ENCODE measurements at regions of chr2 and their contacts with region 1.

Region 1: DNA sequence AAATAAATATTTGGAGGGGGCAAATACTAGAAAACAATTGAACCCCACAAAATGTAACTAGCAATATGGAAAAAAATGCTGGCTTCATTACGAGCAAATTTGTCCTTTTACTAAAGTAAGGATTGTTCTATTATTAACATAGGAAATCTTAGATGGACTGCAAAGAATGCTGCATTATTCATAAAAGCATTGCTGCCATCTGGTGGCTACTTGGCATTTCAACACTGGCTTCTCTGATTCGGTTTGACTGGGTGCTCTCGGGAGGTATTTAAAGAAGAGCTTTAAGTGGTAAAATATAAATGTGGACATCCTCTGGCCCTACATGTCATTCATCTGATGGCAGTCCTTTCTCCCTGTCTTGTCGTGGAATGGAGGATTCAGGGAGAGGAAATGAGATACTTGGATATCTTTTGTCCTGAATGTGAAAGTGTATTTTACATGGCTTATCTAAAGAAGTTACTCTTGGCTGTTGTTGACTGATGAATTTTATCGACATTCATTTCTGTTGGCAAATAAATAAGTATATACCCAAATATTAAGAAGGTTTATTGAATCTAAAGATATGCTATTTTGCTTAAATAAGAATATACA is 130.2 kb downstream of the ARHGAP15 start:
- DNase-seq: peak; percentile 87
- ATAC-seq: no peak
- H3K4me3 Mint-ChIP-seq: peak overlapping the region; percentile 61
- H3K27ac Mint-ChIP-seq: peak overlapping the region; percentile 94
- H3K4me1 Mint-ChIP-seq: peaks cover 72% of the 10 kb centered on the region
- H3K27me3 Mint-ChIP-seq: no peaks in the 10 kb centered on the region
- CTCF ChIP-seq: peak; percentile 88

Region 2: DNA sequence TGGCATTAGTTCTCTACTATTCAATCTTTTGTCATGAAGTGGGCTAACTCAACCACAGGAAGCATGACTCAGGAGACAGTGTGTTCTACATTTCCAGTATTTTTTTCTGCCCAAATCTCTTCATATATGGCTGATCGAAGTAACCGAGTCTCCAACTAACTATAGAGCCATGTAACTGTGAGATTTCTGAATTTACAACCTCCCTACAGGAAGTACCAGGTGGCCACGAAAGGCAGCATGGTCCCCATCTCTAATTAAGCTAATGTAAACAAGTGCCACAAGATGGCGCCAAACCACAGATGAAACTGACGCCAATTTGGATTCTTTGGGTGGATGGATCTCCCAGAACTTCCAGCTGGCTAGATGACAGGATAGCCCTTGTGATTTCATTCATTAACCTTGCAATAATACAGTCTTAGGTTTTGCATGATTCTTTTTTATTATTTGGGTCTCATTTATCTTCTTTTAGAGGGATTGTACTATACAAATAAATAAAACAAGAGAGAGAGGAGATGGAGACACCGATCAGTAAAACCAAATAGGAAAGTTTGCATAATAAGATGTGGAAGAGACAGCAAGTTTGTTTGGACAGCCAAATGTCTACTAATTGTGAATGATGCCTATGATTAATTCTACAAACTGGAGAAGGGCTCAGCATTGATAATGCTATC is 148.6 kb before region 1 on chr2:
- CTCF ChIA-PET with region 1: interaction called, 98 read pairs
- POLR2A ChIA-PET with region 1: interaction called, 4 read pairs
- intact Hi-C with region 1: loop called (anchors 1 kb)
- DNase-seq: peak; percentile 79
- ATAC-seq: peak; percentile 85
- H3K4me3 Mint-ChIP-seq: peak overlapping the region; percentile 64
- H3K27ac Mint-ChIP-seq: peak overlapping the region; percentile 90
- H3K4me1 Mint-ChIP-seq: peaks cover 31% of the 10 kb centered on the region
- H3K27me3 Mint-ChIP-seq: no peaks in the 10 kb centered on the region
- CTCF ChIP-seq: peak; percentile 95

Region 3: GRCh38 chr2:143162123-143162837 is 97.2 kb before region 1 on chr2:
- CTCF ChIA-PET with region 1: interaction called, 169 read pairs
- POLR2A ChIA-PET with region 1: interaction called, 3 read pairs
- intact Hi-C with region 1: loop called (anchors 1 kb)
- DNase-seq: peak; percentile 70
- ATAC-seq: peak; percentile 95
- H3K4me3 Mint-ChIP-seq: no peak overlapping the region
- H3K27ac Mint-ChIP-seq: peak overlapping the region; percentile 31
- H3K4me1 Mint-ChIP-seq: peaks cover 79% of the 10 kb centered on the region
- H3K27me3 Mint-ChIP-seq: no peaks in the 10 kb centered on the region
- CTCF ChIP-seq: peak; percentile 82

Region 4: DNA sequence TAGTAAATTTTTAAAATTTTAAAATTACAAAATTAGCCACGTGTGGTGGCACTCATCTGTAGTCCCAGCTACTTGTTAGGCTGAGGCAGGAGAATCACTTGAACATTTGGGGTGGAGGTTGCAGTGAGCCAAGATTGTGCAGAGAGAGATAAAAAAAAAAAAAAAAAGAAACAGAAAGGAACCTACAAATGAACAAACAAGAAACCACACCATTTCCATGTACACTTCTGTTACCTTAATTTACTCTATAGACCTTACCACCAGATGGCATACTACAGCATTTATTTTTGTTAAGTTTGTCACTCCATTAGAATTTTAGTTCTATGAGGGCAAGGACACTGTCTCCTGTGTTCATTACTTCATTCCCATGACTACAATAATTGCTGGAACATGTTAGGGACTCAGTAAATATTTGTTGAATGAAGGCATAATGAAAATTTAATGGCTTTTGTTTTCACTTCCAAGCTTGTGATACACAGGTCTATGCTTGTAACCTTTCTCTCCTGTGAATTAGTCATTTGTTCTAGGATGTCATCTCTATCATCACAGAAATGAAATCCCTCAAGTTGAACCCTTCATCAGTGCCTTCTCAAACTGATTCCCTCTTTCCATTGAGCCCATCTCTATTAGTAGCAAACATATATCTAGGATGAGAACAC is 54.2 kb before region 1 on chr2:
- CTCF ChIA-PET with region 1: interaction called, 19 read pairs
- POLR2A ChIA-PET with region 1: no interaction called
- intact Hi-C with region 1: loop called (anchors 2 kb)
- DNase-seq: no peak
- ATAC-seq: peak; percentile 77
- H3K4me3 Mint-ChIP-seq: no peak overlapping the region
- H3K27ac Mint-ChIP-seq: peak overlapping the region; percentile 64
- H3K4me1 Mint-ChIP-seq: peaks cover 50% of the 10 kb centered on the region
- H3K27me3 Mint-ChIP-seq: no peaks in the 10 kb centered on the region
- CTCF ChIP-seq: peak; percentile 45

Region 5: DNA sequence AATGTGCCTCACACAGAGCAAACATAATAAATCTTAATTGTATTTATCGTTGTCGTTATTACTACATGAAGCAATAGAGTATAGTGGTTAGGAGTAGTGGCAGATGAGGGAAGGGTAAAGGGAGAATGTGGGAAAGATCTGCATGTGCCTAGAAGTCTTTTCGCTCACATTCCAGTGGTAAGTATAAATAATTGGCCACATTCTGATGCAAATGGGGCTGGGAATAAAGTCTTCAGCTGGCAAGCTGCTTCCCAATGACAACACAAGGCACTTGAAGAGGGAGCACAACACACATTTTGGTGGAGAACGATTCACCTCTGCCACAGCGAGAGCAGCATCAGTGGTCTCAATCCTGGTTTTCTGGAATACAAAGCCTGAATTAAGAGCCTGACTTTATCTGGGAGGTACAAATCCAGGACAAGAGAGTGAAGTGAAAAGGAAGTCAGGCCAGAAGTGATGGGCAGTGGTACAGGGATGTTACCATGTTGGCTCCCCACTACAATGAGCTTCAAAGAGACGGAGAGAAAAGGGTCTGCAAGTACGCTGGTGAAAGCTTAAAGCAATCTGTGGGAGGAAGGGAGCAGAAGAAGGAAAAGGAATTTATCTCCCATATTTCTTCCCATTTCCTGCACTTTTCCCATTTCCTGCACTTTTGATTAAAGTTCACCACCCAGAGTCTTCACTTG is 17.9 kb before region 1 on chr2:
- CTCF ChIA-PET with region 1: interaction called, 15 read pairs
- POLR2A ChIA-PET with region 1: interaction called, 4 read pairs
- intact Hi-C with region 1: no loop called
- DNase-seq: no peak
- ATAC-seq: no peak
- H3K4me3 Mint-ChIP-seq: no peak overlapping the region
- H3K27ac Mint-ChIP-seq: no peak overlapping the region
- H3K4me1 Mint-ChIP-seq: peaks cover 12% of the 10 kb centered on the region
- H3K27me3 Mint-ChIP-seq: no peaks in the 10 kb centered on the region
- CTCF ChIP-seq: no peak

Region 6: GRCh38 chr2:143375384-143375880 is 116.0 kb after region 1 on chr2:
- CTCF ChIA-PET with region 1: no interaction called
- POLR2A ChIA-PET with region 1: no interaction called
- intact Hi-C with region 1: no loop called
- DNase-seq: no peak
- ATAC-seq: no peak
- H3K4me3 Mint-ChIP-seq: no peak overlapping the region
- H3K27ac Mint-ChIP-seq: no peak overlapping the region
- H3K4me1 Mint-ChIP-seq: peaks cover 13% of the 10 kb centered on the region
- H3K27me3 Mint-ChIP-seq: no peaks in the 10 kb centered on the region
- CTCF ChIP-seq: no peak

Measured in activated CD8-positive, alpha-beta T cell treated with anti-CD3 and anti-CD28 coated beads for 36 hours (primary cell).